Right ventricle myocardium superior (tissue), 1 donor: ENCODE measurements at regions of chr12 and their contacts with region 1.

Region 1: GRCh38 chr12:48157018-48157888 is at the start of gene ASB8:
- DNase-seq: peak; percentile 100
- ATAC-seq: peak; percentile 98
- total RNA-seq, gene ASB8: 86.0 TPM

Region 2: DNA sequence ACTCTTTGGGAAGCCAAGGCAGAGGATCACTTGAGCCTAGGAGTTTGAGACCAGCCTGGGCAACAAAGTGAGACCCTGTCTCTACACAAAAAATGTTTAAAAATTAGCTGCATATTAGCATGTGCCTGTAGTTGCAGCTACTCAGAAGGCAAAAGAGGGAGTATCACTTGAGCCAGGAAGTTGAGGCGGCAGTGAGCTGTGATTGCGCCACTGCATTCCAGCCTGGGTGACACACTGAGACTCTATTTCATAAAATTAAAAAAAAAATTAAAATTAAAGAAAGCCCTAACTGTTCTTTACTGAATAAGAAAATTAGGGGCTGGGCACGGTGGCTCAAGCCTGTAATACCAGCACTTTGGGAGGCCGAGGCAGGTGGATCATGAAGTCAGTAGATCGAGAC is 78.4 kb before region 1 on chr12:
- intact Hi-C with region 1: no loop called
- DNase-seq: no peak
- ATAC-seq: no peak

Region 3: GRCh38 chr12:48105862-48106680 is 51.2 kb before region 1 on chr12 and contains the start of gene SENP1:
- intact Hi-C with region 1: loop called (anchors 10 kb)
- DNase-seq: peak; percentile 93
- ATAC-seq: peak; percentile 99
- total RNA-seq, gene SENP1: 5.1 TPM

Region 4: DNA sequence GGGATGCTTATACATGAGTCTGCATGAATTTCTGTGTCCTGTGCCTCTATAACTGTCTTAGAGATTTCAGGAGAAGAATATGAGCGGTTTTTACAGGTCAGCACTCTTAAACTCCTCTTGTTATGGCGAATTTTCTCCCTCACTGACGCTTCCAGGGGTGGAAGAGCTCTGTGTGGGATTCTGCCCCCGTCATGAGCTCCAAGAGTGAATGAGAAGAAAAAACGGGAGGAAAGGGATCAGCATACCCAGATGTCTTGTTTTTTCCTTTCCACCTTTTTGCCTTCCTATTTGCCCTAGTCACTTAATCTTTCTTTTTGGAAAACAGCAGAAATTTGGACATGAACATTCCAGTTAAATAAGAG is 37.4 kb before region 1 on chr12:
- intact Hi-C with region 1: loop called (anchors 5 kb)
- DNase-seq: no peak
- ATAC-seq: peak; percentile 29